Spleen (tissue), 13 donors: ENCODE measurements at regions of chr7 and their contacts with region 1.

Region 1: DNA sequence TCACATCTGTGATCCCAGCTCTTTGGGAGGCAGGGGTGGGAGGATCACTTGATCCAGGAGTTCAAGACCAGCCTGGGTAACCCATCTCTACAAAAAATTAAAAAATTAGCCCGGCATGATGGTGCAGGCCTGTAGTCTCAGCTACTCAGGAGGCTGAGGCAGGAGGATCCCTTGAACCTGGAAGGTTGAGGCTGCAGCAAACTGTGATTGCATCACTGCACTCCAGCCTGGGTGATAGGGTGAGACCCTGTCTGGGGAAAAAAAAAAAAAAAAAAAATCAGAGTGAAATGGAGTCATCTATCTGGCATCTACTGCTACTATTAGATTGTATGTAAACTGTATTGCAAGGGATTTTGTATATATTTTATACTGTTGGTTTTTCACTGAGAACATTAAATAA is 59.1 kb downstream of the KMT2E start:
- DNase-seq: no peak
- H3K4me3 ChIP-seq: no peak overlapping the region
- H3K27ac ChIP-seq: no peak overlapping the region
- H3K4me1 ChIP-seq: no peaks in the 10 kb centered on the region
- H3K27me3 ChIP-seq: no peaks in the 10 kb centered on the region
- CTCF ChIP-seq: no peak
- POLR2A ChIP-seq: no peak

Region 2: GRCh38 chr7:105106473-105106872 is 33.3 kb after region 1 on chr7:
- intact Hi-C with region 1: loop called (anchors 5 kb)
- DNase-seq: no peak
- H3K4me3 ChIP-seq: no peak overlapping the region
- H3K27ac ChIP-seq: no peak overlapping the region
- H3K4me1 ChIP-seq: peaks cover 0 to 19% (median 5%) of the 10 kb centered on the region in 6 donors
- H3K27me3 ChIP-seq: no peaks in the 10 kb centered on the region
- CTCF ChIP-seq: no peak
- POLR2A ChIP-seq: no peak